ENCODE measurements at regions of chr1 and their contacts with region 1.

Region 1: GRCh38 chr1:158203693-158204457 is 23.2 kb downstream of the CD1D start:
- DNase-seq: peak in 2 of 3 donors; percentile 64 to 66
- H3K4me3 ChIP-seq: peak overlapping the region in 1 of 3 experiments; percentile 22
- H3K4me3 Mint-ChIP-seq: peak overlapping the region in 1 of 2 donors; percentile 68
- H3K27ac ChIP-seq: no peak overlapping the region
- H3K27ac Mint-ChIP-seq: peak overlapping the region in 1 of 7 donors; percentile 63
- H3K4me1 ChIP-seq: peaks cover 11 to 23% of the 10 kb centered on the region in 2 donors
- H3K4me1 Mint-ChIP-seq: peaks cover 22% of the 10 kb centered on the region
- H3K27me3 ChIP-seq: peaks cover 9 to 19% of the 10 kb centered on the region in 2 donors
- H3K27me3 Mint-ChIP-seq: peaks cover 20 to 30% (median 23%) of the 10 kb centered on the region in 3 donors
- CTCF ChIP-seq: peak; percentile 97

Region 2: DNA sequence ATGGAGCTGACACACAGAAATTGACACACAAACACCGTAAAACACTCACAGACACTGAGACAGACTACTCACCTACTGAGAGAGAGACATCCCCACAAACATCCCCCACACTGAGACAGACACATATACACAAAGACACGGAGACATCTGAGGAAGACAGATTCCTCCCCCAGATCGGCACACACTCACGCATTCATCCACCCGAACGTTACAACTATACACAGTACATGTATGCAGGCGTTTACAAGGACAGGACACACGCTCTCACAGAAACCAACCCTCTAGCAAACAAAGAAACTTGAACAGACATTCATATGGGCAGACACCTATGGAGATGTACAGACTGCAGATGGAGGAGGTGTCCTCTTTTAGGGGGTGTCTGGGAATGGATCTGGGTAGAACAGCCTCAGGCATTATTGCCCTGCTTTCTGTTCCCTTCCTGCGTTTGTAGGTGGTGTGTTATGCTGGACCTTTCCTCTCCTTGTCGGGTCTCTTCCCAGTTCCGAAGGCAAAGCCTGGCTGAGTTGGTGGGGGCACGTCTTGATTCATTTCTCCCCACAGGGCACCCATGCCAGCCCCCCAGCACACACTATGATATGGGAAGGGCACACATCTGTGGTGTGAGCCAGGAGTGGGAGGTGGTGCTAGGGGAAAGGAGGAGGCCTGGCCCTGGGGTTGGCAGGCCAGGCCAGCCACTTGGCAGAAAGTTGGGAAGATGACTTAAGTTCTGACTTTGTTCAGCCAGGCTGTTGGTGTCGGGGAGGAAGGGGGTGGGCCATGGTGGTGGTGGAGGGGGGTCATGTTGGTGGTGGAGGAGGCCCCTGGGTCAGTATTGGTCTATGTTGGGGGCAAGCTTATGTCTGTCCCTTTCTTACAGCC is 208.9 kb before region 1 on chr1:
- intact Hi-C with region 1: no loop called
- DNase-seq: no peak
- H3K4me3 ChIP-seq: no peak overlapping the region
- H3K4me3 Mint-ChIP-seq: peak overlapping the region; percentile 28 to 69
- H3K27ac ChIP-seq: no peak overlapping the region
- H3K27ac Mint-ChIP-seq: peak overlapping the region in 1 of 7 donors; percentile 0
- H3K4me1 ChIP-seq: peaks cover 11 to 16% of the 10 kb centered on the region in 2 donors
- H3K4me1 Mint-ChIP-seq: peaks cover 16% of the 10 kb centered on the region
- H3K27me3 ChIP-seq: peaks cover 22 to 52% of the 10 kb centered on the region in 2 donors
- H3K27me3 Mint-ChIP-seq: peaks cover 44 to 69% (median 51%) of the 10 kb centered on the region in 3 donors
- CTCF ChIP-seq: no peak

Region 3: DNA sequence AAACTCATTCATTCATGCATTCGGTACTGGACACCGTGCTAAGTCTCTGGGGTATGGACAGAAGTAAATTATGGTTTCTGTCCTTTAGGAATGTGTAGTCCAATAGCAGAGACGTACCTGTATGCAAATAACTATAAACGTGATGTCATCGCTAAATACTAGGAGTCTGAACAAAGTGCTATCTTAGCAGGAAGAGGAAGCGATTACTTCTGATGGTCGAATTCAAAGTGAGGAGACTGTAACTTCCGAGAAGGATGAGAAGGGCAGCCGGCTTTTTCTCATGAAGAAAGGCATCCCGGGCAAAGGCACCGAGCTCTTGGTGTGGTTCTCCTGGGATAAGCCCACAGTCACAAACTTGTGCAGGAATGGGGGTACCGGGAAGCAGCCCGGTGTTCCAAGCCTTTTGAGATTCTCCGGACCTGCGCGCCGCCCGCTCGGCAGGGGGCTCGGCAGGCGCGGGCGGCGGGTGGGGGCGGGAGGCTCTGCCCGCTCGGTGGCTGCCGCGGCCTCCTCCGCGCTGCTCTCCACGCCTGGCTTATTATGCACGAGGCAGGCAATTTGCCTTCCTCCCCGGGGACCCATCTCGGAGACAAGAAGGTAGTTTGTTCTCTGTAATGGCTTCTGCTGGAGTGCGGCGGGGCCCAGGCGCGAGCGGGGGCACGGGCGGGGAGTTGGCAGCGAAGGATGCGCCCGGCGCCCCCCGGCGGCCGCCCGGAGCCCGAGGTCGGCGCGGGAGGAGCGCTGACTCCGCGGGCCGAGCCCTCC is 90.7 kb before region 1 on chr1:
- intact Hi-C with region 1: no loop called
- DNase-seq: peak in 1 of 3 donors; percentile 20
- H3K4me3 ChIP-seq: peak overlapping the region; percentile 17 to 78 (median 26)
- H3K4me3 Mint-ChIP-seq: peak overlapping the region; percentile 82 to 96
- H3K27ac ChIP-seq: no peak overlapping the region
- H3K27ac Mint-ChIP-seq: no peak overlapping the region
- H3K4me1 ChIP-seq: peaks cover 12 to 18% of the 10 kb centered on the region in 2 donors
- H3K4me1 Mint-ChIP-seq: peaks cover 23% of the 10 kb centered on the region
- H3K27me3 ChIP-seq: peaks cover 17 to 39% of the 10 kb centered on the region in 2 donors
- H3K27me3 Mint-ChIP-seq: peaks cover 38 to 63% (median 51%) of the 10 kb centered on the region in 3 donors
- CTCF ChIP-seq: peak; percentile 57

Region 4: GRCh38 chr1:158329733-158330132 is 125.9 kb after region 1 on chr1:
- intact Hi-C with region 1: no loop called
- DNase-seq: peak in 2 of 3 donors; percentile 30 to 39
- H3K4me3 ChIP-seq: no peak overlapping the region
- H3K4me3 Mint-ChIP-seq: no peak overlapping the region
- H3K27ac ChIP-seq: no peak overlapping the region
- H3K27ac Mint-ChIP-seq: peak overlapping the region in 1 of 7 donors; percentile 74
- H3K4me1 ChIP-seq: peaks cover 58 to 68% of the 10 kb centered on the region in 2 donors
- H3K4me1 Mint-ChIP-seq: peaks cover 23% of the 10 kb centered on the region
- H3K27me3 ChIP-seq: no peaks in the 10 kb centered on the region
- H3K27me3 Mint-ChIP-seq: peaks cover 0 to 4% (median 0%) of the 10 kb centered on the region in 3 donors
- CTCF ChIP-seq: peak; percentile 49

Region 5: GRCh38 chr1:158496374-158496773 is 292.5 kb after region 1 on chr1:
- intact Hi-C with region 1: loop called in 1 of 2 experiments (anchors 10 kb)
- DNase-seq: peak; percentile 16 to 45 (median 30)
- H3K4me3 ChIP-seq: no peak overlapping the region
- H3K4me3 Mint-ChIP-seq: no peak overlapping the region
- H3K27ac ChIP-seq: no peak overlapping the region
- H3K27ac Mint-ChIP-seq: no peak overlapping the region
- H3K4me1 ChIP-seq: no peaks in the 10 kb centered on the region
- H3K4me1 Mint-ChIP-seq: peaks cover 3% of the 10 kb centered on the region
- H3K27me3 ChIP-seq: peaks cover 3 to 4% of the 10 kb centered on the region in 2 donors
- H3K27me3 Mint-ChIP-seq: peaks cover 2 to 7% (median 2%) of the 10 kb centered on the region in 3 donors
- CTCF ChIP-seq: peak; percentile 52

Measured in CD14-positive monocyte (primary cell).